Activated naive CD4-positive, alpha-beta T cell treated with anti-CD3 and anti-CD28 coated beads for 36 hours (primary cell): ENCODE measurements at regions of chr5 and their contacts with region 1.

Region 1: DNA sequence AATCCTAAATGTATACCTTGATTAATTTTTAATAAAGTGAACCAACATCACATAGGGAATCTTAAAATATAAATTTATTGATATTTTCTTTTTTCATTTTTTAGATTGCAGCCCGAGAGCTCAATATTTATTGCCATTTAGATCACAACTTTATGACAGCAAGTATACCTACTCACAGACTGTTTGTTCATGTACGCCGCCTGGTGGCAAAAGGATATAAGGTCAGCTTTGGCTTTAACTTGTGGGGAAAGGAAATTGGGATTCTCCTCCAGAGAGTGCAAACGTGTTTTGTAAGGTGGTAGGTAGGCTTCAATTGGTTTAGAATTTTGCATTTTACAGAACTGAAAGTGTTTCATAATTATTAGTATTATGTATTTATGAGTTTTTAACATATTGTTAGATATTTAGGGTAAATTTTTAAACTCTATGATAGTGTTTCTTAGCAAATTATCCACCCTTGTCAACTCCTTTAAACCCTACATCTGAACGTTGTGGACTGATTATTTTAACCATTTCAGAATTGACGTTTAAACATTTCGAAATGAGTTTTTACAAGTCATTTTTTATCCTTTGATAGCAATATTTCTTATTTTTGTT is 17.5 kb upstream of the DHFR start:
- DNase-seq: peak; percentile 85
- H3K4me3 Mint-ChIP-seq: no peak overlapping the region
- H3K27ac Mint-ChIP-seq: no peak overlapping the region
- H3K4me1 Mint-ChIP-seq: no peaks in the 10 kb centered on the region
- H3K27me3 Mint-ChIP-seq: no peaks in the 10 kb centered on the region

Region 2: DNA sequence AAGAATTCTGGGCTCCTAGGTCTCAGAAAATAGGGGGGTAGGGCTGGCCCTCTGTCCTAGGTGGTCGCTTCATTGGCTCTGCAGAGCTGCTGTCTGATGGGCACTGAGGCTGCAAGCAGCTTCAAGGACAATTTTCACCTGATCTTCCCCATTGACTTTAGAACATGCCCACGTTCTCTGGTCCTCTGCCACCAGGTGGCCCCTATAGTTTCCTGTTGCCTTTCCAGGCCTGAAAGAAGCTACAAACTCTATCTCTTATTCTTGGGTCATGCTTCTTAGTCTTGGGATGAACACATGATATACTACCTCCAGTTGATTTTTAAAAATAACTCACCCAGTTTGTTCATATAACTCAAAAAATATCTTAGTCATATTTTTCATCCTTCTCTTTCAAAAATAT is 326.2 kb before region 1 on chr5:
- CTCF ChIA-PET with region 1: interaction called, 3 read pairs
- intact Hi-C with region 1: loop called (anchors 1 kb)
- DNase-seq: peak; percentile 63
- H3K4me3 Mint-ChIP-seq: no peak overlapping the region
- H3K27ac Mint-ChIP-seq: no peak overlapping the region
- H3K4me1 Mint-ChIP-seq: no peaks in the 10 kb centered on the region
- H3K27me3 Mint-ChIP-seq: peaks cover 4% of the 10 kb centered on the region

Region 3: GRCh38 chr5:80481019-80481893 is 191.0 kb before region 1 on chr5:
- CTCF ChIA-PET with region 1: interaction called, 4 read pairs
- intact Hi-C with region 1: loop called (anchors 1 kb)
- DNase-seq: peak; percentile 60
- H3K4me3 Mint-ChIP-seq: no peak overlapping the region
- H3K27ac Mint-ChIP-seq: no peak overlapping the region
- H3K4me1 Mint-ChIP-seq: no peaks in the 10 kb centered on the region
- H3K27me3 Mint-ChIP-seq: no peaks in the 10 kb centered on the region

Region 4: GRCh38 chr5:80516826-80517225 is 155.4 kb before region 1 on chr5:
- CTCF ChIA-PET with region 1: no interaction called
- intact Hi-C with region 1: no loop called
- DNase-seq: peak; percentile 13
- H3K4me3 Mint-ChIP-seq: no peak overlapping the region
- H3K27ac Mint-ChIP-seq: no peak overlapping the region
- H3K4me1 Mint-ChIP-seq: no peaks in the 10 kb centered on the region
- H3K27me3 Mint-ChIP-seq: no peaks in the 10 kb centered on the region

Region 5: GRCh38 chr5:80654391-80655230 is 17.6 kb before region 1 on chr5 and contains the starts of genes DHFR and MSH3:
- CTCF ChIA-PET with region 1: interaction called, 8 read pairs
- intact Hi-C with region 1: loop called (anchors 2 kb)
- DNase-seq: peak; percentile 95
- H3K4me3 Mint-ChIP-seq: peak within 1 kb of the TSS; percentile 95
- H3K27ac Mint-ChIP-seq: peak within 1 kb of the TSS; percentile 99
- H3K4me1 Mint-ChIP-seq: peaks cover 25% of the 10 kb centered on the region
- H3K27me3 Mint-ChIP-seq: no peaks in the 10 kb centered on the region
- total RNA-seq, gene DHFR: 107 to 112 TPM
- total RNA-seq, gene MSH3: 25.1 to 25.8 TPM